ENCODE measurements at regions of chr12 and their contacts with region 1.

Region 1: GRCh38 chr12:13211859-13212664 is 15.5 kb downstream of the EMP1 start:
- DNase-seq: peak; percentile 45 to 85 (median 72)
- ATAC-seq: peak; percentile 86
- H3K4me3 ChIP-seq: no peak overlapping the region
- H3K4me3 Mint-ChIP-seq: no peak overlapping the region
- H3K27ac ChIP-seq: no peak overlapping the region
- H3K27ac Mint-ChIP-seq: no peak overlapping the region
- H3K4me1 ChIP-seq: no peaks in the 10 kb centered on the region
- H3K4me1 Mint-ChIP-seq: peaks cover 6% of the 10 kb centered on the region
- H3K27me3 ChIP-seq: no peaks in the 10 kb centered on the region
- H3K27me3 Mint-ChIP-seq: peaks cover 7% of the 10 kb centered on the region
- CTCF ChIP-seq: peak; percentile 85

Region 2: DNA sequence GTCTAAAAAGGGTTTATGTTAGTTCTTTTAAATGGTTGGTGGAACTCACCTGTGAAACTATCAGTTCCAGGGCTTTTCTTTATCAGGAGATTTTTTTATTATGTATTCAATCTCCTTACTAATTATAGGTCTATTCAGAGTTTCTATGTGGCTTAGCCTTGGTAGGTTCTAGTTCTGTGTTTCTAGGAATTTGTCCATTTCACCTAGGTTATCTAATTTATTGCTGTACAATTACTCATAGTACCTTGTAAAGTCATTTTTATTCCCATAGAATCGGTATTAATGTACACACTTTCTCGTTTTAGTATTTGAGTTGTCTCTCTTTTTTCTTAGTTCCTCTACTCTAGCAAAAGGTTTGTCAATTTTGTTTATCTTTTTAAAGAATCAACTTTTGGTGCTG is 796.2 kb before region 1 on chr12:
- CTCF ChIA-PET with region 1: no interaction called
- POLR2A ChIA-PET with region 1: no interaction called
- intact Hi-C with region 1: no loop called
- DNase-seq: no peak
- ATAC-seq: no peak
- H3K4me3 ChIP-seq: no peak overlapping the region
- H3K4me3 Mint-ChIP-seq: no peak overlapping the region
- H3K27ac ChIP-seq: no peak overlapping the region
- H3K27ac Mint-ChIP-seq: peak overlapping the region; percentile 27
- H3K4me1 ChIP-seq: no peaks in the 10 kb centered on the region
- H3K4me1 Mint-ChIP-seq: peaks cover 17% of the 10 kb centered on the region
- H3K27me3 ChIP-seq: no peaks in the 10 kb centered on the region
- H3K27me3 Mint-ChIP-seq: no peaks in the 10 kb centered on the region
- CTCF ChIP-seq: no peak

Region 3: DNA sequence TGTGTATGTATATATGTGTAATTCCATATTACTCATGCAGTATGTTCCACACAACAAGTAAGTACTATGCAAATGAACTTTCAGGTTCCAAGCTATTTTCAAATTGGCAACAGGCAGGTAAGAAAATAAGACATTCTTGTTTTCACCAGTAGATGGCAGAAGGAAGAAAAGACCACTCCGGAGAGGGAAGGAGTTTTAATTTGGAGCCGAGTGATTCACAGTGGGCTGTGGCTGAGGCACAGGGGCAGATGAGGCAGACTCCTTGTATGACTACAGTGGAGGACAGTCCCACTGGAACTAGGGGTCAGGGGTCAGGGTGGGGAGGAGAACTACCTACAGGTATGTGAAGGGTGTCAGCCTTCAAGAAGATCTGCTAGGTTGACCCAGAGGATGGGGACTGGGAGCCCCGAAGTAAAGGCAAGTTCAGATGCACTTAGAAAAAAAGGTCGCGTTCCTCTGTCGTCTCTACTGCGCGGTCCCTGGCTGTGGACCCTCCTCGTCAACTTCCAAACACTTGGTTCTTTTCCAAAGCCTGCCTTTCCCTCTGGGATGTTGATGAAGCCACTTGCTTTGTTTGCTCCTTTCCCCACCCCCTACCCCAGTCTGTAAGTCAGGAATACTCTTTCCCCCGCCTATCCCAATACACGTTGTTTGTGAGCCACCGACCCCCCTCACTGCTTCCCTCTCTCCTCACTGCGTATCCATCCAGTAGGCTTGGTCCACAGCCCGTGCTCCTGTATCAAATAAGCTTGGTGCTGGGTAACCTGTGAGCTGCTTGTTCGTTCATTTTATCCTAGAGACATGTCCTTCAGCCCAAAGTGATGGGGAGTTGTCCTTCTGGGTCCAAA is 374.8 kb before region 1 on chr12:
- CTCF ChIA-PET with region 1: interaction called, 3 read pairs
- POLR2A ChIA-PET with region 1: no interaction called
- intact Hi-C with region 1: loop called (anchors 1 to 2 kb)
- DNase-seq: peak in 5 of 9 experiments; percentile 7 to 62 (median 25)
- ATAC-seq: peak; percentile 84
- H3K4me3 ChIP-seq: no peak overlapping the region
- H3K4me3 Mint-ChIP-seq: no peak overlapping the region
- H3K27ac ChIP-seq: no peak overlapping the region
- H3K27ac Mint-ChIP-seq: no peak overlapping the region
- H3K4me1 ChIP-seq: no peaks in the 10 kb centered on the region
- H3K4me1 Mint-ChIP-seq: peaks cover 23% of the 10 kb centered on the region
- H3K27me3 ChIP-seq: no peaks in the 10 kb centered on the region
- H3K27me3 Mint-ChIP-seq: no peaks in the 10 kb centered on the region
- CTCF ChIP-seq: peak; percentile 66

Region 4: DNA sequence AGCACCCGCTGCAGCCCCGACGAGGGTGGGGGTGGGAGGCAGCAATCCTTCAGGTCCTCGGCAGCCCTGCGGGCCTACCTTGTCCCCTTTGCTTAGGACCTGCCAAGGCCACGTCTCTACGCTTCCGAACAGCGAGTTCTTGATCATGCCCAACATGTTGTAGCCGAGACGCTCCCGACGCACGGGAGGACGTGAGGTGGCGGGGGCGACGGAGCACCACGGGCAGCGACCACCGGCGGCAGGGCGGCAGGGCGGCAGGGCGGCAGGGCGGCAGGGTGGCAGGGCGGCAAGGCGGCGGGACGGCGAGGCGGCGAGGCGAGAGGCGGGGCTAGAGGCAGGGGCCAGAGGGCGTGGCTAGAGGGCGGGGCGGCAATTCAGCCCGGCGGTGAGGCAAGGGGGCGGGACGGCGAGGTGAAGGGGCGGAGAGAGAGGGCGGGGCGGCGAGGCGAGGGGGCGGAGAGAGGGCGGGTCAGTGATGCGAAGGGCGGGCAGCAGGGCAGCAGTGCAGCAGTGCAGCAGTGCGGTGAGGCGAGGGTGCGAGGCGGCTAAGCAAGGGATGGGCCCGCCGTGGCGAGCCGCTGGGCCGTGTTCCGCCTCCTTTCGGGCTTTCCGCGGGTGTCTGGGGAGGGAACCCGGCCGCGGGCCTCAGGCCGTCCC is 212.0 kb before region 1 on chr12 and contains the start of gene HEBP1:
- CTCF ChIA-PET with region 1: interaction called, 4 read pairs
- POLR2A ChIA-PET with region 1: no interaction called
- intact Hi-C with region 1: loop called (anchors 1 to 5 kb)
- DNase-seq: peak; percentile 90 to 98 (median 96)
- ATAC-seq: peak; percentile 95
- H3K4me3 ChIP-seq: peak within 1 kb of the TSS; percentile 84 to 85
- H3K4me3 Mint-ChIP-seq: peak within 1 kb of the TSS; percentile 96
- H3K27ac ChIP-seq: peak within 1 kb of the TSS; percentile 41 to 55
- H3K27ac Mint-ChIP-seq: peak within 1 kb of the TSS; percentile 82
- H3K4me1 ChIP-seq: peaks cover 20% of the 10 kb centered on the region
- H3K4me1 Mint-ChIP-seq: peaks cover 29% of the 10 kb centered on the region
- H3K27me3 ChIP-seq: peaks cover 0 to 4% of the 10 kb centered on the region in 2 experiments
- H3K27me3 Mint-ChIP-seq: peaks cover 6% of the 10 kb centered on the region
- CTCF ChIP-seq: no peak
- total RNA-seq, gene HEBP1: 4.6 to 5.6 TPM

Region 5: GRCh38 chr12:13094347-13094746 is 117.7 kb before region 1 on chr12:
- CTCF ChIA-PET with region 1: interaction called, 157 read pairs
- POLR2A ChIA-PET with region 1: interaction called, 4 read pairs
- intact Hi-C with region 1: loop called (anchors 1 kb)
- DNase-seq: peak in 1 of 9 experiments; percentile 21
- ATAC-seq: no peak
- H3K4me3 ChIP-seq: no peak overlapping the region
- H3K4me3 Mint-ChIP-seq: no peak overlapping the region
- H3K27ac ChIP-seq: no peak overlapping the region
- H3K27ac Mint-ChIP-seq: no peak overlapping the region
- H3K4me1 ChIP-seq: peaks cover 14% of the 10 kb centered on the region
- H3K4me1 Mint-ChIP-seq: peaks cover 15% of the 10 kb centered on the region
- H3K27me3 ChIP-seq: no peaks in the 10 kb centered on the region
- H3K27me3 Mint-ChIP-seq: peaks cover 4% of the 10 kb centered on the region
- CTCF ChIP-seq: no peak

Region 6: GRCh38 chr12:13154027-13154538 is 58.0 kb before region 1 on chr12:
- CTCF ChIA-PET with region 1: interaction called, 13 read pairs
- POLR2A ChIA-PET with region 1: no interaction called
- intact Hi-C with region 1: no loop called
- DNase-seq: no peak
- ATAC-seq: no peak
- H3K4me3 ChIP-seq: no peak overlapping the region
- H3K4me3 Mint-ChIP-seq: no peak overlapping the region
- H3K27ac ChIP-seq: no peak overlapping the region
- H3K27ac Mint-ChIP-seq: no peak overlapping the region
- H3K4me1 ChIP-seq: no peaks in the 10 kb centered on the region
- H3K4me1 Mint-ChIP-seq: no peaks in the 10 kb centered on the region
- H3K27me3 ChIP-seq: no peaks in the 10 kb centered on the region
- H3K27me3 Mint-ChIP-seq: no peaks in the 10 kb centered on the region
- CTCF ChIP-seq: no peak

Region 7: DNA sequence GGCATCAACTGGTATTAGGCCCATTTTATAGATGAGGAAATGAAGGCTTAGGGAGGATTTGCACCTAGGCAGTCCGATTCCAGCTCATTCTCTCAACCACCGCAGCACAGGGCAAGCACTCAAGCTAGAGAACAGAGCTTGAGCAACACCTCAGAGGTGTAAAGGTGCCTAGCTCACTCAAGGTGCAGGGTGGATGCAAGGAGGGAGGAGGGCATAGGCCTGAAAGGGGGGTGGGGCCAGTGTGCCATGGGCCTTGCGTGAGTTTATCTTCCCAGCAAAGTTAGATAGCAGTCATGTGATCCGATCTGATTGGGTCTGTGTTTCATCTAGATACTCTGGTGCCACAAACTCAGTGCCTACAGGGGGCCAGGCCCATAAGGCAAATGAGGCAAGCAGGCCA is 25.7 kb before region 1 on chr12:
- CTCF ChIA-PET with region 1: interaction called, 20 read pairs
- POLR2A ChIA-PET with region 1: no interaction called
- intact Hi-C with region 1: no loop called
- DNase-seq: no peak
- ATAC-seq: no peak
- H3K4me3 ChIP-seq: no peak overlapping the region
- H3K4me3 Mint-ChIP-seq: no peak overlapping the region
- H3K27ac ChIP-seq: no peak overlapping the region
- H3K27ac Mint-ChIP-seq: no peak overlapping the region
- H3K4me1 ChIP-seq: no peaks in the 10 kb centered on the region
- H3K4me1 Mint-ChIP-seq: no peaks in the 10 kb centered on the region
- H3K27me3 ChIP-seq: no peaks in the 10 kb centered on the region
- H3K27me3 Mint-ChIP-seq: peaks cover 17% of the 10 kb centered on the region
- CTCF ChIP-seq: no peak

Region 8: GRCh38 chr12:13233830-13234641 is 22.0 kb after region 1 on chr12:
- CTCF ChIA-PET with region 1: interaction called, 16 read pairs
- POLR2A ChIA-PET with region 1: no interaction called
- intact Hi-C with region 1: no loop called
- DNase-seq: peak in 6 of 9 experiments; percentile 5 to 55 (median 32)
- ATAC-seq: peak; percentile 59
- H3K4me3 ChIP-seq: no peak overlapping the region
- H3K4me3 Mint-ChIP-seq: no peak overlapping the region
- H3K27ac ChIP-seq: no peak overlapping the region
- H3K27ac Mint-ChIP-seq: no peak overlapping the region
- H3K4me1 ChIP-seq: no peaks in the 10 kb centered on the region
- H3K4me1 Mint-ChIP-seq: no peaks in the 10 kb centered on the region
- H3K27me3 ChIP-seq: peaks cover 0 to 2% of the 10 kb centered on the region in 2 experiments
- H3K27me3 Mint-ChIP-seq: peaks cover 18% of the 10 kb centered on the region
- CTCF ChIP-seq: peak; percentile 75

Region 9: DNA sequence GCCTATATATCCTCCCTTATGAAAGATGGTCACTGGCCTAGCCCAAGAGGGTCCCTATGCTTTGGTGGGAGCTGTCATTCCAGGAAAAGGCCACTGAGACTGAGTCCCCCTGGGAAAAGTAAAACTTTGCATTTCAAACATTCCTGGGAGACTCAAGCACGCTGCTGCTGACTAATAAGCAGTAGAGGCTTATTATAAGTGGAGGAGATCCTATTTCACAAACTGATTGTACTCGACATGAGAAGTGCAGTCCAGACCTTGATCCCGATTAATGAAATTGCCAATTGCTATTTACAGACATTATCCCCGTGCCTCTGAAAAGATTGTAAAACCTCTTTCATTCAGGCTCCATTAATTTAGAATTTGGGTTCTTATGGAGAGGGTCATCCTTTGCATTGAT is 81.0 kb after region 1 on chr12:
- CTCF ChIA-PET with region 1: no interaction called
- POLR2A ChIA-PET with region 1: no interaction called
- intact Hi-C with region 1: no loop called
- DNase-seq: no peak
- ATAC-seq: no peak
- H3K4me3 ChIP-seq: no peak overlapping the region
- H3K4me3 Mint-ChIP-seq: no peak overlapping the region
- H3K27ac ChIP-seq: no peak overlapping the region
- H3K27ac Mint-ChIP-seq: no peak overlapping the region
- H3K4me1 ChIP-seq: no peaks in the 10 kb centered on the region
- H3K4me1 Mint-ChIP-seq: no peaks in the 10 kb centered on the region
- H3K27me3 ChIP-seq: no peaks in the 10 kb centered on the region
- H3K27me3 Mint-ChIP-seq: peaks cover 6% of the 10 kb centered on the region
- CTCF ChIP-seq: no peak

Region 10: DNA sequence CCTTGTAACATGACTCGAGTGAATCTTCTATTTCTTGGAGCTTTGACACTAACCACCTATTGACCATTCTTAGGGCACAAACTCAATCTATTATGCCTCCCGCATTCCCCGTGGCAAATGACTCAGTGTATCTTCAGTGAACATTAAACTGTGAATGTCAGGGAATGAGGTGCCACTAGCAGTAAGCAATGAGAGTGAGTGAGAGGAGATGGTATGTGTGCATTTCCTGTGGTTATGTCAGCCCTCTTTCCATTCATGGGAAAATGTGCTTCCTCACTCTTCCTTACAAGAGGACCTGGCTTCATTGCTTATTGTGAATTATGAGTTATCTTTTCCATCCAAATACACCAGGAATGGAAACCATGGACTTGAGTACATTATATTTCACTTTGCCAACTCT is 213.7 kb after region 1 on chr12:
- CTCF ChIA-PET with region 1: no interaction called
- POLR2A ChIA-PET with region 1: no interaction called
- intact Hi-C with region 1: no loop called
- DNase-seq: no peak
- ATAC-seq: no peak
- H3K4me3 ChIP-seq: no peak overlapping the region
- H3K4me3 Mint-ChIP-seq: no peak overlapping the region
- H3K27ac ChIP-seq: no peak overlapping the region
- H3K27ac Mint-ChIP-seq: no peak overlapping the region
- H3K4me1 ChIP-seq: no peaks in the 10 kb centered on the region
- H3K4me1 Mint-ChIP-seq: no peaks in the 10 kb centered on the region
- H3K27me3 ChIP-seq: peaks cover 0 to 2% of the 10 kb centered on the region in 2 experiments
- H3K27me3 Mint-ChIP-seq: peaks cover 2% of the 10 kb centered on the region
- CTCF ChIP-seq: no peak

Region 11: GRCh38 chr12:13864081-13864673 is 652.1 kb after region 1 on chr12:
- CTCF ChIA-PET with region 1: no interaction called
- POLR2A ChIA-PET with region 1: no interaction called
- intact Hi-C with region 1: no loop called
- DNase-seq: peak in 7 of 9 experiments; percentile 9 to 52 (median 26)
- ATAC-seq: no peak
- H3K4me3 ChIP-seq: no peak overlapping the region
- H3K4me3 Mint-ChIP-seq: no peak overlapping the region
- H3K27ac ChIP-seq: no peak overlapping the region
- H3K27ac Mint-ChIP-seq: no peak overlapping the region
- H3K4me1 ChIP-seq: no peaks in the 10 kb centered on the region
- H3K4me1 Mint-ChIP-seq: no peaks in the 10 kb centered on the region
- H3K27me3 ChIP-seq: no peaks in the 10 kb centered on the region
- H3K27me3 Mint-ChIP-seq: peaks cover 14% of the 10 kb centered on the region
- CTCF ChIP-seq: peak; percentile 63

Measured in CD8-positive, alpha-beta T cell (primary cell).